ENCODE measurements at regions of chr6 and their contacts with region 1.

Region 1: DNA sequence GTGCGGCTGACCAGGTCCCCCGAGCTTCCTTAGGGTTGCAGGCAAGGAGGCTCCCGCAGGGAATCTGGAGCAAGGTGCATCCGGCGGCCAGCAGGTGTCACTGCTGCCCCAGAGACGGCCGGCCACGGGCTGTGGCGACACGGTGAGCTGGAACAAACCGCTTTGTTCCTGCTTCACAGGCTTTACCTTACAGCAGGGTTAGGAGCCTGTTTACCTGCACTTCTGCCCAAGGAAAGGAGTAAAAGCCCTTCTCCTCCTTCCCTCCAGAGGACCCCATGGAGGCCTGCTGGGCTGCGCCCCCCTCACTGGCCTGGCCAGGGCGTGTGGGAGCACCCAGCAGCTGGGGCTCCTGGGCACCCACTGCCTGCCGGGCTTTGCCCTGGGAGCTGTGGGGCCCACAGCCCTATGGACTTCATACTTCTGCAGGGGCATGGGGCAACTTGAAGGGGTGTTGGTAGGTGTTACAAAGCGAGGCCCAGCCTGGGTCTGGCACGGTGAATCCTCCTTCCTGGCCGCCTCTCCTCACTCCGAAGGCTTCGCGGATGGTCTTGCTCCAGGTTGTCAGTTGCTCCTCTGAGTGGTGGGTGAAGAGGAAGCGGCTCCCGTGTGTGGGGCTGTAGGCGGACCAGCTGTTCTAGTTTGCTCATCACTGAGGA is 88.4 kb downstream of the CDC5L start:
- DNase-seq: peak; percentile 65
- ATAC-seq: peak; percentile 98
- H3K4me3 ChIP-seq: no peak overlapping the region
- H3K27ac ChIP-seq: no peak overlapping the region
- H3K4me1 ChIP-seq: peaks cover 2% of the 10 kb centered on the region; the same call in 1 of the 2 replicates
- H3K27me3 ChIP-seq: peaks cover 40% of the 10 kb centered on the region
- CTCF ChIP-seq: peak; percentile 93
- POLR2A ChIP-seq: peak; percentile 57; the same call in 1 of the 2 replicates
- RAD21 ChIP-seq: peak; percentile 97

Region 2: DNA sequence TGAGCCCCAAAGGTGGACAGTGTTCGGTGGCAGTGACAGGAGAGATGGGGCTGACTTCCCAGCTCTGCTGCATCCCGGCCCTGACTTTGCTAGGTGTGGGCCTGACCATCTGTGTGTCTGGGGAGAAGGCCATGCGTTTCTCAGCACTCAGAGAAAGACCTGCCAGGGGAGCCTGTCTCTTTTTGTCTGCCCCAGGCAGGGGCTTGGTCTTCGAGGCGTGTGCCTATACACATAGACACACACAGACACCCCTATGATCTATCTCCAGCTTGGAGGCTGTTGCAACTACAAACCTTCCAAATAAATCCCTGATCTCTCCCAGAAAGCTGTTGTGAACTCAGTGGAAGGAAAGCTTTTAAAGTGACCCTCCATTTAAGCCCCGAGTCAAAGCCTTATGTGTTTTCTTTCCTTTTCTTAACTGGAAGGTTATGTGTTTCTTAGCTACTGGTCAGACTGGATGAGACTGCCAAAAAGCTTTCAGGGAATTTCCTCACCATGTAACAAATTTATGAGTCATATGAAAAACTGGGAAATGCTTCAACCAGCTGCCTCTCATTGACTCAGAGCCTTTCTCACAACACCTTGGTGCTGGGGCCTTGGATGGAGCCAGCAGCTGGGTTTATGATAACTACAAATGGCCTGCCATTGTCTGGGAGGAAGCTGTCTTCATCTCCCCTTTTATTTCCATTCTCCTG is 14.2 kb after region 1 on chr6:
- CTCF ChIA-PET with region 1: interaction called, 15 read pairs
- POLR2A ChIA-PET with region 1: no interaction called
- dilution Hi-C with region 1: no loop called
- in situ Hi-C with region 1: no loop called
- intact Hi-C with region 1: no loop called
- DNase-seq: peak; percentile 99
- ATAC-seq: peak; percentile 85
- H3K4me3 ChIP-seq: peak overlapping the region; percentile 9; the same call in 1 of the 2 replicates
- H3K27ac ChIP-seq: peak overlapping the region; percentile 68
- H3K4me1 ChIP-seq: peaks cover 14% of the 10 kb centered on the region
- H3K27me3 ChIP-seq: peaks cover 4% of the 10 kb centered on the region; the same call in 1 of the 2 replicates
- CTCF ChIP-seq: no peak
- POLR2A ChIP-seq: peak; percentile 58
- RAD21 ChIP-seq: no peak

Region 3: DNA sequence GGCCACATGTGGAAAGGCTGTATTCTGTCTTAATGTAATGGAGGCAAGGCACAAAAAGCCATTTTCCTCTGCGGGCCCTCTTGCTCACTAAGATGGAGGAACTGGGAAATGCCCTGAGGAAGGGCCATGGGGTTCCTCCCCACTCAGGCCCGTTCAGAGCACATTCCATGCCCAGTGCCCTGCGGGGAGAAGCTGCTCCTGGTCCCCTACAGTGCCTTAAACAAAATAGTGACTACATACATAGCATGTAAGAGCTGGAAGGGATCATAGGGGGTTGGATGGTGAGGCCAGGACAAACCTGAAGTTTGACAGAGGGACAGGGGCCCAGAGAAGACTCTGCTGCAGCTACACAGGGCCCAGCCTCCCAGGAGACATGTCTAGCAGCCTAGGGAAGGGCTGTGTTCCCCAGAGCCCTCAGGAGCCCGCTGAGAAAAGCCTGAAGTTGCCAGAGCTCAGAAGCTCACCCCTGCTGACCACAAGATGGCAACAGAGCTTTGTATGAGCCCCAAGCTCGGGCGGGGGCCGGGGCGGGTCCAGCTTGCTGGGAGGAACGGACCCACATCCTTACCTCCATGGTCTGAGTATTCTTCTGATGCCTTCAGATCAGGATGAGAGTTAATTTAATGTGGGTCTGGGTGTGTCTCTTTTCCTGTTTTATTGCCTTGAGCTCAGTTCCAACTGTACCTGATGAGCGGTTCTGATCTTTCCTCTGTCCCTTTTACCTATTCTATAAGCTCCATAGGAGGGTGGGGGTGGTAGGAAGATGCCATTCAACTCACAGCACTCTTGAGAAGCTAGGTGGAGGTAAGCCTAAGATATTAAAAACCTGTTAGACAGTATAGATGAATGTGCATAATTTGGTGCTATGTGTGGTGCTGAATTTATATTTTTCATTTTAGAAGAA is 154.5 kb after region 1 on chr6:
- CTCF ChIA-PET with region 1: interaction called, 21 read pairs
- POLR2A ChIA-PET with region 1: interaction called, 3 read pairs
- dilution Hi-C with region 1: no loop called
- in situ Hi-C with region 1: no loop called
- intact Hi-C with region 1: loop called (anchors 5 kb)
- DNase-seq: peak; percentile 51
- ATAC-seq: peak; percentile 95
- H3K4me3 ChIP-seq: no peak overlapping the region
- H3K27ac ChIP-seq: no peak overlapping the region
- H3K4me1 ChIP-seq: no peaks in the 10 kb centered on the region
- H3K27me3 ChIP-seq: peaks cover 19% of the 10 kb centered on the region
- CTCF ChIP-seq: peak; percentile 68
- POLR2A ChIP-seq: no peak
- RAD21 ChIP-seq: peak; percentile 74

Region 4: GRCh38 chr6:44655412-44656342 is 179.8 kb after region 1 on chr6:
- CTCF ChIA-PET with region 1: interaction called, 10 read pairs
- POLR2A ChIA-PET with region 1: no interaction called
- dilution Hi-C with region 1: no loop called
- in situ Hi-C with region 1: no loop called
- intact Hi-C with region 1: loop called (anchors 5 kb)
- DNase-seq: peak; percentile 28
- ATAC-seq: peak; percentile 70
- H3K4me3 ChIP-seq: no peak overlapping the region
- H3K27ac ChIP-seq: no peak overlapping the region
- H3K4me1 ChIP-seq: peaks cover 10% of the 10 kb centered on the region
- H3K27me3 ChIP-seq: no peaks in the 10 kb centered on the region
- CTCF ChIP-seq: peak; percentile 90
- POLR2A ChIP-seq: no peak
- RAD21 ChIP-seq: peak; percentile 93

Region 5: DNA sequence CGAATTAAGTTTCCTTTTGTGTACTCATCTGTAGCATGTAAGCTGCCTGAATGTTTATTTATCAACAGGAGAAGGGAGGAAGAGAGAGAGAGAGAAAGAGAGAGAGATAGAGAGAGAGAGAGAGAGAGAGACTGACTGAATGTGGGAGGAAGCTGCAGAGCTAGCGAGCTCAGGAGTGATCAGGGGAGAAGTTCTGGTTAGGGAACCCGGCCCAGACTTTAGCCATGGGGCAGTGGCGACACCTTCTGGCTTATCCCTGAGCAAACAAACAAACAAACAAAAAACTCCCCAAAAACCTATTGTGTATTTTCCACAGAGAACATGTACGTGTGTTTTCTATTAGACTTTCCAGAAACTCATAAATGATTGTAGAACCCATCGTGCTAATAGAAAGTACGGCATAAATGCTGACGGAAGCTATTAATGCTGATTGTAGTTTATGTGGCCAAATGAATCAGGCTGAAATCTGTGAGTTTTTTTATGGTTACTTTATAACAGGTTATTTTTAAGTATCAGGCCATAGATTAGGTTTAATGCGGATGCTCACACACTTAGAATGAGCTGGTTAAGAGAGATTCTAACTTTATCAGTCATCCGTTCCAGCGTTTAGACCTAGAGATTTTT is 1446.9 kb after region 1 on chr6:
- CTCF ChIA-PET with region 1: interaction called, 10 read pairs
- POLR2A ChIA-PET with region 1: no interaction called
- dilution Hi-C with region 1: no loop called
- in situ Hi-C with region 1: no loop called
- intact Hi-C with region 1: loop called (anchors 2 kb)
- DNase-seq: peak; percentile 61
- ATAC-seq: peak; percentile 78
- H3K4me3 ChIP-seq: no peak overlapping the region
- H3K27ac ChIP-seq: no peak overlapping the region
- H3K4me1 ChIP-seq: peaks cover 2% of the 10 kb centered on the region; the same call in 1 of the 2 replicates
- H3K27me3 ChIP-seq: peaks cover 4% of the 10 kb centered on the region
- CTCF ChIP-seq: peak; percentile 77
- POLR2A ChIP-seq: no peak
- RAD21 ChIP-seq: peak; percentile 91